ENCODE measurements at regions of chr13 and their contacts with region 1.

Region 1: DNA sequence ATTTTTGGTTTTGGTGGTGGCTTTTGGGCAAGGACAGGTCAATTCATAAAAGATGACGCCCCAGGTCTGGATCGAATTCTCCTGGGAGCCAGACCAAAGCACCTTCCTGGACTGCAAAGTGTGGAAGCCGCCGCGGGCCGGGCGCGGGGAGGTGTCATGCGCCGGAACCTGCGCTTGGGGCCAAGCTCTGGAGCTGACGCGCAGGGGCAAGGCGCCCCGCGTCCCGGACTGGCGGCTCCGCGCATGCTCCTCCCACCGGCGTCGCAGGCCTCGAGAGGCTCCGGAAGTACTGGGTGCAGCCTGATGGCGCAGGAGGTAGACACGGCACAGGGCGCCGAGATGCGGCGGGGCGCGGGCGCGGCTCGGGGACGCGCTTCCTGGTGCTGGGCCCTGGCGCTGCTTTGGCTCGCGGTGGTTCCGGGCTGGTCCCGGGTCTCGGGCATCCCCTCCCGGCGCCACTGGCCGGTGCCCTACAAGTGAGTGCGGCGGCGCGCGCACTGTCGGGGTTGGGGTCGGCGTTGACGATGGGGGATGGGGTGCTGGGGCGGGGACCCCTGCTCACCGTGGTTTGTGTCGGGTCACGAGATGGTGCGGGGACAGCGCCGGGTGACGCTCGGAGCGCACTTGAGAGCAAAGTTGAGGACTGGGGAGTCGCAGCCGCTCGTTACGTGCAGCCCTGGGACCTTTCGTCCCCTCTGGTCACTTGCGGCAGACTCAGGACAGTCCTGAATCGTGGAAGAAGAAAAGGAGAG is at the start of gene CLN5:
- DNase-seq: peak; percentile 95
- H3K4me3 Mint-ChIP-seq: peak within 1 kb of the TSS; percentile 89
- H3K27ac Mint-ChIP-seq: peak within 1 kb of the TSS; percentile 90
- H3K4me1 Mint-ChIP-seq: peaks cover 34% of the 10 kb centered on the region
- H3K27me3 Mint-ChIP-seq: peaks cover 1% of the 10 kb centered on the region
- total RNA-seq, gene CLN5: 13.5 and 15.8 TPM in 2 replicates

Region 2: GRCh38 chr13:76769271-76769791 is 222.6 kb before region 1 on chr13:
- intact Hi-C with region 1: no loop called
- DNase-seq: no peak
- H3K4me3 Mint-ChIP-seq: no peak overlapping the region
- H3K27ac Mint-ChIP-seq: no peak overlapping the region
- H3K4me1 Mint-ChIP-seq: no peaks in the 10 kb centered on the region
- H3K27me3 Mint-ChIP-seq: peaks cover 1% of the 10 kb centered on the region

Region 3: GRCh38 chr13:76917095-76917494 is 74.9 kb before region 1 on chr13:
- intact Hi-C with region 1: no loop called
- DNase-seq: no peak
- H3K4me3 Mint-ChIP-seq: no peak overlapping the region
- H3K27ac Mint-ChIP-seq: no peak overlapping the region
- H3K4me1 Mint-ChIP-seq: no peaks in the 10 kb centered on the region
- H3K27me3 Mint-ChIP-seq: peaks cover 16% of the 10 kb centered on the region

Region 4: GRCh38 chr13:77009011-77009410 is 17.0 kb after region 1 on chr13:
- intact Hi-C with region 1: loop called (anchors 2 kb)
- DNase-seq: no peak
- H3K4me3 Mint-ChIP-seq: no peak overlapping the region
- H3K27ac Mint-ChIP-seq: peak overlapping the region; percentile 62
- H3K4me1 Mint-ChIP-seq: peaks cover 22% of the 10 kb centered on the region
- H3K27me3 Mint-ChIP-seq: no peaks in the 10 kb centered on the region

Measured in activated T-helper 2 cell treated with anti-CD3 and anti-CD28 coated beads, Interferon-gamma antibody, Interleukin-2, Interleukin-4, amounts not matched to agents 10 μg/mL and 5 μg/mL and 100 μg/mL, durations not matched to agents 14 hours and 24 hours and 36 hours (primary cell).